BJ (cell line): ENCODE measurements at regions of chr3 and their contacts with region 1.

Region 1: GRCh38 chr3:63349583-63350521 is 71.7 kb downstream of the SYNPR start:
- DNase-seq: no peak
- H3K4me3 ChIP-seq: no peak overlapping the region
- H3K27me3 ChIP-seq: peaks cover 2% of the 10 kb centered on the region; the same call in 1 of the 2 replicates
- CTCF ChIP-seq: peak; percentile 86

Region 2: GRCh38 chr3:63467409-63467808 is 117.6 kb after region 1 on chr3:
- CTCF ChIA-PET with region 1: no interaction called
- POLR2A ChIA-PET with region 1: no interaction called
- DNase-seq: no peak
- H3K4me3 ChIP-seq: no peak overlapping the region
- H3K27me3 ChIP-seq: no peaks in the 10 kb centered on the region
- CTCF ChIP-seq: no peak

Region 3: DNA sequence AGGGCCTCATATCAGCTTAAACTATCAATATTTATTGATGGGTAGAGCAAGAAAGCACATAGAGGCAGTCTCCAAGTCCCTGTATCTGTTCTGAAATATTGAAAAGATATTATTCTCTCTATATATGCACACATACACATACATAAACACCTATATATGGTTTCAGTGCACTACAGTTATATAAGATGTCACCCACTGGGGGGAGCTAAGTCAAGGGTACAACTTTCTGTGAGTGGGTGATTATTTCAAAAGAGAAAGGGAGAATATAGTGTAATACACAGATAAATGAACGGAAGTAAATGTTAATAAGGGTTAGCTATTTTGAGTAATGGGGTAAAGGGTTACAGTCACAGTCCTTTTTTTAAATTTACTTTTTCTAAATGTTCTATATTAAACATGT is 311.4 kb after region 1 on chr3:
- CTCF ChIA-PET with region 1: interaction called, 57 read pairs
- POLR2A ChIA-PET with region 1: no interaction called
- DNase-seq: no peak
- H3K4me3 ChIP-seq: no peak overlapping the region
- H3K27me3 ChIP-seq: no peaks in the 10 kb centered on the region
- CTCF ChIP-seq: no peak

Region 4: GRCh38 chr3:63791974-63792545 is 442.2 kb after region 1 on chr3:
- CTCF ChIA-PET with region 1: interaction called, 28 read pairs
- POLR2A ChIA-PET with region 1: no interaction called
- DNase-seq: peak; percentile 35
- H3K4me3 ChIP-seq: no peak overlapping the region
- H3K27me3 ChIP-seq: 0 out of 2 replicates have a peak, but pooled peaks cover 1% of the 10 kb centered on the region
- CTCF ChIP-seq: peak; percentile 40; the same call in 1 of the 2 replicates

Region 5: GRCh38 chr3:63807961-63808565 is 458.2 kb after region 1 on chr3:
- CTCF ChIA-PET with region 1: interaction called, 207 read pairs
- POLR2A ChIA-PET with region 1: no interaction called
- DNase-seq: no peak
- H3K4me3 ChIP-seq: no peak overlapping the region
- H3K27me3 ChIP-seq: no peaks in the 10 kb centered on the region
- CTCF ChIP-seq: no peak

Region 6: GRCh38 chr3:63818281-63819150 is 468.7 kb after region 1 on chr3:
- CTCF ChIA-PET with region 1: interaction called, 207 read pairs
- POLR2A ChIA-PET with region 1: no interaction called
- DNase-seq: no peak
- H3K4me3 ChIP-seq: no peak overlapping the region
- H3K27me3 ChIP-seq: no peaks in the 10 kb centered on the region
- CTCF ChIP-seq: peak; percentile 72